Naive thymus-derived CD4-positive, alpha-beta T cell (primary cell): ENCODE measurements at regions of chr7 and their contacts with region 1.

Region 1: GRCh38 chr7:99325545-99326407 is at the start of gene ARPC1A:
- DNase-seq: peak; percentile 84 to 96 (median 94)
- ATAC-seq: peak; percentile 95
- H3K4me3 ChIP-seq: peak within 1 kb of the TSS; percentile 77
- H3K4me3 Mint-ChIP-seq: peak within 1 kb of the TSS; percentile 86 to 99 (median 92)
- H3K27ac ChIP-seq: peak within 1 kb of the TSS; percentile 89
- H3K27ac Mint-ChIP-seq: peak within 1 kb of the TSS; percentile 78 to 95 (median 90)
- H3K4me1 ChIP-seq: peaks cover 25 to 26% of the 10 kb centered on the region in 2 donors
- H3K4me1 Mint-ChIP-seq: peaks cover 33 to 48% (median 43%) of the 10 kb centered on the region in 7 donors
- H3K27me3 ChIP-seq: no peaks in the 10 kb centered on the region
- H3K27me3 Mint-ChIP-seq: peaks cover 0 to 11% (median 0%) of the 10 kb centered on the region in 5 donors
- total RNA-seq, gene ARPC1A: 28.1 to 62.5 (median 43.2) TPM

Region 2: DNA sequence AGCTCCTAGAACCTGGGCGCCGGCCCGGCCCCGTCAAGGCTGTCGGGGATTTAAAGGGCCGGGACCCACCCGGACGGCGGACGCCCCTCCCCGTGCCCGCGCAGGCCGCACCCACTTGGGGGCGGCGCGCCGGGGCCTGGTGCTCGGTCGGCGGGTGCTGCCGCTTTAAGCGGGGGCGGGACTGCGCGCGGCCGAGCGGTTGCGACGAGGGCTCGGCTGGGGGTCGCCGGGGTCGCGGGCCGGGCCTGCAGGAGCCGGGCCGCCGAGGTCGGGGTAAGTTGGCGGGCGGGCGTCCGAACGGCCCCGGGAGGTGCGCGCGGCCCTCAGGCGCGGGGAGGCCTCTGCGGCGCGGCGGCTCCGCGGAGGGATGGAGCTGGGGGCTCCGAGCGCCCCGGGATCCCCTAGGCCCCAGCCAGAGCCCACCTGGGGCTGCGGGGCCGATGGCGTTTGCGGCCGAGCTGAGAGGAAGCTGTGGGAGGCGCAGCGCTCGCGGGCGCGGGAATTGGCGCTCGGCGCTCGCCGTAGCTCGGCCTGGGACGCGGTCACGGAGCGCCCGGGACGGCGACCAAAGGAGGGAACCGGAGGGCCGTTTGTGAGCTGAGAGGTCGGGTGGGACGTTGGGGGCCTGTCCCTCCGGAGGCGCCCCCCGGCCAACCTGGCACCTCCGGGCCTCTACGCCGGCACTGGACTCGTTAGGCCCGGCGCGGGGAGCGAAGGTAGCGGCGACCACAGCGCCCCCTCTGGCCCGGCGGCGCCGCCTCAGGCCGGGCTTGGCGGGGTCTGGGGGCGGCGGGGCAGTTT is 447.2 kb before region 1 on chr7 and contains the start of gene TRRAP:
- CTCF ChIA-PET with region 1: no interaction called
- POLR2A ChIA-PET with region 1: interaction called, 3 read pairs
- intact Hi-C with region 1: loop called in 1 of 2 experiments (anchors 10 kb)
- DNase-seq: peak; percentile 63 to 87 (median 82)
- ATAC-seq: peak; percentile 82
- H3K4me3 ChIP-seq: peak within 1 kb of the TSS; percentile 95
- H3K4me3 Mint-ChIP-seq: peak within 1 kb of the TSS; percentile 90 to 99 (median 95)
- H3K27ac ChIP-seq: peak within 1 kb of the TSS; percentile 88
- H3K27ac Mint-ChIP-seq: peak within 1 kb of the TSS; percentile 87 to 98 (median 94)
- H3K4me1 ChIP-seq: peaks cover 9 to 14% of the 10 kb centered on the region in 2 donors
- H3K4me1 Mint-ChIP-seq: peaks cover 0 to 37% (median 26%) of the 10 kb centered on the region in 7 donors
- H3K27me3 ChIP-seq: no peaks in the 10 kb centered on the region
- H3K27me3 Mint-ChIP-seq: peaks cover 0 to 3% (median 0%) of the 10 kb centered on the region in 5 donors
- total RNA-seq, gene TRRAP: 59.1 to 72.3 (median 66.8) TPM

Region 3: GRCh38 chr7:99364961-99365817 is 39.4 kb after region 1 on chr7:
- CTCF ChIA-PET with region 1: interaction called, 3 read pairs
- POLR2A ChIA-PET with region 1: no interaction called
- intact Hi-C with region 1: loop called (anchors 5 kb)
- DNase-seq: peak; percentile 49 to 77 (median 64)
- ATAC-seq: peak; percentile 97
- H3K4me3 ChIP-seq: no peak overlapping the region
- H3K4me3 Mint-ChIP-seq: no peak overlapping the region
- H3K27ac ChIP-seq: no peak overlapping the region
- H3K27ac Mint-ChIP-seq: peak overlapping the region in 4 of 9 donors; percentile 19 to 81 (median 22)
- H3K4me1 ChIP-seq: no peaks in the 10 kb centered on the region
- H3K4me1 Mint-ChIP-seq: peaks cover 0 to 10% (median 0%) of the 10 kb centered on the region in 7 donors
- H3K27me3 ChIP-seq: no peaks in the 10 kb centered on the region
- H3K27me3 Mint-ChIP-seq: no peaks in the 10 kb centered on the region

Region 4: DNA sequence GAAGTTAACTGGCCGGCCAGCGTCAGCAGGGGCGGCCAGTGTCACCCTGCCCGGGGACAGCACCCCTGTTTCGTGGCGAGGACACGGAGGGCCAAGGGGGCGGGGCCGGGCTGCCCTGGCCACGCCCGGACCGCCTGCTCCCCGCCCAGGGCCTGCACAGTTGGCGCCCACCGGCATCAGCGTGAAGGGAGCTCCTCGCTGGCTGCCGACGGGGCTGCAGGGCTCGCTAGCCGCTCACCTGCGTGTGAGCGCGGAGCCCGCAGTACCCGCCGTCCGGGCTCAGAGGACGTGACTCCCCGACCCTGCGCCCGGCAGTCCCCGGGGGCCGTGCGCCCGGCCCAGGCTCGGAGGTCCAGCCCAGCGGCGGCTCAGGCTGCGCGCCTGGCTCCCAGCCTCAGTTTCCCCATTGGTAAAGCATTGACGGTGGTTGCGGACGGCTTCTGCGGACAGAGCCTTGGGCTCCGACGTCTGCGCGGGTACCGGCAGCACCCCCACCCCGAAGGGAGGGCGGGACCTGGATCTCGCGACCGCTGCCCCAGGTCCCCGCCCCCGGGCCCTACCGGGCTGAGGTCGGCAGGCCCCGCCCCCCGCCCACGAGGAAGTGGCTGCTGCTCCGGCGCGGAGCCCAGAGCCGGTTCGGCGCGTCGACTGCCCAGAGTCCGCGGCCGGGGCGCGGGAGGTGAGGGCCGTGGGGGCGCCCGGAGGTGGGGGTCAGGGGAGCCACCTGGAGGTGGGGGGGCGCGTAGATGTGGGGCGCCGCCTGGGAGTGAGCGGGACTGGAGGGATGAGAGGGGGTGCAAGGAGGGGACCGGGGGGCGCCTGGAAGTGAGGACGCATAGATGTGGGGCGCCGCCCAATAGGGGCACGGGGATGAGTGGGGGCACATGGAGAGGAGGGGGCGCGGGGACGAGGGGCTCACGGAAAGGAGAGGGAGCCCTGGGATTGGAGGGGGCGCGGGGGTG is 48.6 kb after region 1 on chr7 and contains the start of gene ARPC1B:
- CTCF ChIA-PET with region 1: interaction called, 3 read pairs
- POLR2A ChIA-PET with region 1: interaction called, 3 read pairs
- intact Hi-C with region 1: loop called (anchors 5 kb)
- DNase-seq: peak; percentile 67 to 86 (median 76)
- ATAC-seq: peak; percentile 82
- H3K4me3 ChIP-seq: peak within 1 kb of the TSS; percentile 83
- H3K4me3 Mint-ChIP-seq: peak within 1 kb of the TSS; percentile 71 to 90 (median 82)
- H3K27ac ChIP-seq: peak within 1 kb of the TSS; percentile 95
- H3K27ac Mint-ChIP-seq: peak within 1 kb of the TSS; percentile 76 to 99 (median 94)
- H3K4me1 ChIP-seq: peaks cover 18 to 35% of the 10 kb centered on the region in 2 donors
- H3K4me1 Mint-ChIP-seq: peaks cover 6 to 36% (median 32%) of the 10 kb centered on the region in 7 donors
- H3K27me3 ChIP-seq: no peaks in the 10 kb centered on the region
- H3K27me3 Mint-ChIP-seq: no peaks in the 10 kb centered on the region
- total RNA-seq, gene ARPC1B: 88.1 to 364 (median 141) TPM

Region 5: GRCh38 chr7:99380032-99380822 is 54.5 kb after region 1 on chr7:
- CTCF ChIA-PET with region 1: interaction called, 3 read pairs
- POLR2A ChIA-PET with region 1: interaction called, 3 read pairs
- intact Hi-C with region 1: loop called in 1 of 2 experiments (anchors 2 kb)
- DNase-seq: peak in 7 of 9 donors; percentile 21 to 37 (median 30)
- ATAC-seq: peak; percentile 15
- H3K4me3 ChIP-seq: peak overlapping the region; percentile 78
- H3K4me3 Mint-ChIP-seq: peak overlapping the region; percentile 78 to 91 (median 84)
- H3K27ac ChIP-seq: peak overlapping the region; percentile 96
- H3K27ac Mint-ChIP-seq: peak overlapping the region; percentile 87 to 99 (median 98)
- H3K4me1 ChIP-seq: peaks cover 44 to 68% of the 10 kb centered on the region in 2 donors
- H3K4me1 Mint-ChIP-seq: peaks cover 29 to 70% (median 60%) of the 10 kb centered on the region in 7 donors
- H3K27me3 ChIP-seq: no peaks in the 10 kb centered on the region
- H3K27me3 Mint-ChIP-seq: no peaks in the 10 kb centered on the region